ENCODE measurements at regions of chr17 and their contacts with region 1.

Region 1: GRCh38 chr17:50865984-50866774 is at the start of gene TOB1:
- DNase-seq: peak; percentile 99
- ATAC-seq: peak; percentile 95
- H3K4me3 ChIP-seq: peak within 1 kb of the TSS; percentile 93 to 100
- H3K27ac ChIP-seq: peak within 1 kb of the TSS; percentile 98
- H3K4me1 ChIP-seq: peaks cover 0 to 1% of the 10 kb centered on the region in 2 donors
- H3K27me3 ChIP-seq: peaks cover 0 to 2% of the 10 kb centered on the region in 2 donors
- total RNA-seq, gene TOB1: 42.0 to 55.2 TPM

Region 2: DNA sequence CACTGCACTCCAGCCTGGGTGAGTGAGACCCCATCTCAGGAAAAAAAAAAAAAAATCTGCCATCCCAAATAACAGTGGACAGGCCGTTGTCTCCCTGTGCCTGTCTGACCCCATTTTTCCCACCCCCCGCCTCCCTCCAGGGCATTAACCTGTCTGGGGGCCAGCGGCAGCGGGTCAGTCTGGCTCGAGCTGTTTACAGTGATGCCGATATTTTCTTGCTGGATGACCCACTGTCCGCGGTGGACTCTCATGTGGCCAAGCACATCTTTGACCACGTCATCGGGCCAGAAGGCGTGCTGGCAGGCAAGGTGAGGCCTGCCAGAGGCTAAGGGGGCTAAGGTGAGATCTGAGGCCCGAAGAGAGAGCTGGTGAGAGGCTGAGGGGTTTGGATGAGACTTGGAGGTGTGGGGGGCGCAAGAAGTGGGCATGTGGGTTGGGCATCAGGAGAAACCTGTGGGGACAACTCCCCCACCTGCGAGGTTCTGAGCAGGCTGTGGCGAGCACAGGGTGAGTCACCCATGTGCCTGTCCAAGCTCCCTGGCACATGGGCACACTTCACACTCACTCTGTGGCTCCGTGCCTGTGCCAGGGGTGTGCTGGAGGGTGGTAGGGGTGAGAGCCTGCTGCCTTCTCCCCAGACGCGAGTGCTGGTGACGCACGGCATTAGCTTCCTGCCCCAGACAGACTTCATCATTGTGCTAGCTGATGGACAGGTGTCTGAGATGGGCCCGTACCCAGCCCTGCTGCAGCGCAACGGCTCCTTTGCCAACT is 193.2 kb before region 1 on chr17:
- intact Hi-C with region 1: no loop called
- DNase-seq: peak; percentile 82 to 89
- ATAC-seq: peak; percentile 74
- H3K4me3 ChIP-seq: no peak overlapping the region
- H3K27ac ChIP-seq: peak overlapping the region in 1 of 2 donors; percentile 30
- H3K4me1 ChIP-seq: no peaks in the 10 kb centered on the region
- H3K27me3 ChIP-seq: no peaks in the 10 kb centered on the region

Region 3: GRCh38 chr17:50904521-50905459 is 38.6 kb after region 1 on chr17:
- intact Hi-C with region 1: loop called in 1 of 2 experiments (anchors 5 kb)
- DNase-seq: peak; percentile 79 to 91
- ATAC-seq: peak; percentile 84
- H3K4me3 ChIP-seq: no peak overlapping the region
- H3K27ac ChIP-seq: peak overlapping the region; percentile 84 to 87
- H3K4me1 ChIP-seq: no peaks in the 10 kb centered on the region
- H3K27me3 ChIP-seq: no peaks in the 10 kb centered on the region

Region 4: GRCh38 chr17:50931144-50931908 is 65.1 kb after region 1 on chr17:
- intact Hi-C with region 1: loop called in 1 of 2 experiments (anchors 1 kb)
- DNase-seq: peak; percentile 93 to 96
- ATAC-seq: peak; percentile 94
- H3K4me3 ChIP-seq: no peak overlapping the region
- H3K27ac ChIP-seq: peak overlapping the region; percentile 93 to 94
- H3K4me1 ChIP-seq: no peaks in the 10 kb centered on the region
- H3K27me3 ChIP-seq: no peaks in the 10 kb centered on the region

Region 5: DNA sequence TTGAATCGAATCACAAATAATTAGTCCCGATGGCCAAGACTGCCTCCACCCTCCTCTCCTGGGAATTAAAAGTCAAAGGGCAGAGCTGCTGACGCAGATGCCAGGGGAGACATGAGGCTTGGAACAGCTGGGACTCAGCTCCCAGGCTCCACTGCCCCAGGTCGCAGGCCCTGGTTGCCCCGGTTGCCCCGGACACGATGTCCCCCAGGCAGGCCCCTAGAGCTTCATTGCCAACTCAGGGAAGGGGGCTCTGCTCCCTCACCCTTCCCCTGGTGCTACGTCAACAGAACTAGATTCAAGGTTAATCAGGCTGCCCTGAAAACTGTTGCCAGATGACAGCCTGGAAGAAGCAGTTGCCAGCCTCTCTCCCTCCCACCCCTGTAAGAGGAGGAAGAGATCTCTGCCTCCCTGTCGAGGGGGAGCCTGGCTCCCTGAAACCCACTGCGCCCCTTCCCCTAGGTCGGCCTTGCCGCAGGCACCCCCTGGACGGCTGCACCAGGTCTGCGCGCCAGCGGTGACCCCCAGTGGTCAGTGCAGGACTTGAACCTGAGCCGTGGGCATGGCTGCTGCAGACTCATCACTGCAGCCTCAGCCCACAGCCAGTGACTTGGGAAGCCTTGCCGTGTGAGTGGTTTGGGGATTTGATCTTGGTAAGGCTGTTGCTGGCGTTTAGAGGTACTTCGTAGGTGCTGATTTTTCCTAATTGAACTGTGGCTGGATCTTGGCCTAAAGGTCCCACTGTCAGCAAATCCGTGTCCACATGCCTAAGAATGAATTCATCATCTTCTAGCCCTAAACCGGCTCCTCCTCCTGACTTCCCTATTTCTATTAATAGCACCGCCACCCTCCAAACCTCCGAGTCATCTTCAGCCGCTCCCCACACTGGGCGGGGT is 84.1 kb after region 1 on chr17:
- intact Hi-C with region 1: loop called (anchors 2 kb)
- DNase-seq: peak; percentile 89 to 93
- ATAC-seq: peak; percentile 89
- H3K4me3 ChIP-seq: no peak overlapping the region
- H3K27ac ChIP-seq: peak overlapping the region in 1 of 2 donors; percentile 9
- H3K4me1 ChIP-seq: no peaks in the 10 kb centered on the region
- H3K27me3 ChIP-seq: no peaks in the 10 kb centered on the region